GM12878 (cell line): ENCODE measurements at regions of chr7 and their contacts with region 1.

Region 1: GRCh38 chr7:24587848-24588247 is 14.6 kb downstream of the PALS2 start:
- DNase-seq: no peak
- ATAC-seq: peak; percentile 92
- H3K4me3 ChIP-seq: peak overlapping the region; percentile 18; the same call in 1 of the 2 replicates
- H3K27ac ChIP-seq: peak overlapping the region; percentile 30
- H3K4me1 ChIP-seq: peaks cover 24% of the 10 kb centered on the region
- H3K27me3 ChIP-seq: no peaks in the 10 kb centered on the region
- CTCF ChIP-seq: peak; percentile 67 to 79 (median 73)
- EP300 ChIP-seq: no peak
- POLR2A ChIP-seq: no peak
- RAD21 ChIP-seq: peak; percentile 91

Region 2: GRCh38 chr7:23863209-23863798 is 724.5 kb before region 1 on chr7:
- CTCF ChIA-PET with region 1: interaction called, 6 read pairs
- POLR2A ChIA-PET with region 1: no interaction called
- RAD21 ChIA-PET with region 1: interaction called, 3 read pairs
- SMC1A ChIA-PET with region 1: no interaction called
- in situ Hi-C with region 1: no loop called
- intact Hi-C with region 1: loop called (anchors 2 kb)
- DNase-seq: no peak
- ATAC-seq: peak; percentile 55; the same call in 2 of the 3 replicates
- H3K4me3 ChIP-seq: no peak overlapping the region
- H3K27ac ChIP-seq: no peak overlapping the region
- H3K4me1 ChIP-seq: no peaks in the 10 kb centered on the region
- H3K27me3 ChIP-seq: no peaks in the 10 kb centered on the region
- CTCF ChIP-seq: peak; percentile 53 to 63 (median 62)
- EP300 ChIP-seq: no peak
- POLR2A ChIP-seq: no peak
- RAD21 ChIP-seq: peak; percentile 85

Region 3: GRCh38 chr7:24290004-24290641 is 297.7 kb before region 1 on chr7:
- CTCF ChIA-PET with region 1: interaction called, 6 read pairs
- POLR2A ChIA-PET with region 1: no interaction called
- RAD21 ChIA-PET with region 1: interaction called, 3 read pairs
- SMC1A ChIA-PET with region 1: interaction called, 8 read pairs
- in situ Hi-C with region 1: no loop called
- intact Hi-C with region 1: loop called (anchors 1 kb)
- DNase-seq: peak; percentile 70
- ATAC-seq: peak; percentile 99
- H3K4me3 ChIP-seq: no peak overlapping the region
- H3K27ac ChIP-seq: no peak overlapping the region
- H3K4me1 ChIP-seq: 0 out of 2 replicates have a peak, but pooled peaks cover 2% of the 10 kb centered on the region
- H3K27me3 ChIP-seq: peaks cover 7% of the 10 kb centered on the region in 2 experiments
- CTCF ChIP-seq: peak; percentile 63 to 76 (median 71)
- EP300 ChIP-seq: no peak
- POLR2A ChIP-seq: no peak
- RAD21 ChIP-seq: peak; percentile 90

Region 4: DNA sequence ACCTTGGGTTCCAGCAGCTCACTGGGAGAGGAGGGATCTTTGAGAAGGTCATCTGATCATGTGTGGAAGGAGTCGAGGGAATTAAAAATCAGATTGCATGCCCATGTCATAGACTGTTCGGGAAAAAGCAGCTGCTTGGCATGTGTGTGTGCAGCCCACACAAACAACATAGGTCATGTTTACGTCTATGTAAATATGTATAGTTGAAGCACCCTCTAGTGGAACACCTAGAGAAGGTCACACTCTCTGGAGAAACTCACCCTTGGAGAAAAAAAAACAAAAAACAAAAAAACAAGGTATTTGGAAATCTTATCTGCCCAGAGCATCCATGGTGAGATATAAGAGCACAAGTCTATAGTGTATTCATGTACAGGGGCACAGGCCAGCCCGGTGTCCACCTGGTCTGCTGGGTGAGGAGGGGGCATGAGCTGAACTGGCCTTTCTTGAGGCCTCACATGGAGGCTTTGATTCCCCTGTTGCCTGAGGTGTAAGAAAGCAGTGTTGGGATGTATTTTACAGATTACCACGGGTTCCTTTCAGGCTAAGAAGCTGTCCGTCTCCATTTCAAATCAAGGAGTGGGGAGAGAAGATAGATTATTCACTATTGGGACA is 205.8 kb before region 1 on chr7:
- CTCF ChIA-PET with region 1: interaction called, 6 read pairs
- POLR2A ChIA-PET with region 1: no interaction called
- RAD21 ChIA-PET with region 1: no interaction called
- SMC1A ChIA-PET with region 1: interaction called, 4 read pairs
- in situ Hi-C with region 1: no loop called
- intact Hi-C with region 1: loop called (anchors 1 kb)
- DNase-seq: no peak
- ATAC-seq: peak; percentile 94
- H3K4me3 ChIP-seq: no peak overlapping the region
- H3K27ac ChIP-seq: no peak overlapping the region
- H3K4me1 ChIP-seq: peaks cover 3% of the 10 kb centered on the region
- H3K27me3 ChIP-seq: no peaks in the 10 kb centered on the region
- CTCF ChIP-seq: peak; percentile 56 to 65 (median 57)
- EP300 ChIP-seq: no peak
- POLR2A ChIP-seq: no peak
- RAD21 ChIP-seq: peak; percentile 85

Region 5: DNA sequence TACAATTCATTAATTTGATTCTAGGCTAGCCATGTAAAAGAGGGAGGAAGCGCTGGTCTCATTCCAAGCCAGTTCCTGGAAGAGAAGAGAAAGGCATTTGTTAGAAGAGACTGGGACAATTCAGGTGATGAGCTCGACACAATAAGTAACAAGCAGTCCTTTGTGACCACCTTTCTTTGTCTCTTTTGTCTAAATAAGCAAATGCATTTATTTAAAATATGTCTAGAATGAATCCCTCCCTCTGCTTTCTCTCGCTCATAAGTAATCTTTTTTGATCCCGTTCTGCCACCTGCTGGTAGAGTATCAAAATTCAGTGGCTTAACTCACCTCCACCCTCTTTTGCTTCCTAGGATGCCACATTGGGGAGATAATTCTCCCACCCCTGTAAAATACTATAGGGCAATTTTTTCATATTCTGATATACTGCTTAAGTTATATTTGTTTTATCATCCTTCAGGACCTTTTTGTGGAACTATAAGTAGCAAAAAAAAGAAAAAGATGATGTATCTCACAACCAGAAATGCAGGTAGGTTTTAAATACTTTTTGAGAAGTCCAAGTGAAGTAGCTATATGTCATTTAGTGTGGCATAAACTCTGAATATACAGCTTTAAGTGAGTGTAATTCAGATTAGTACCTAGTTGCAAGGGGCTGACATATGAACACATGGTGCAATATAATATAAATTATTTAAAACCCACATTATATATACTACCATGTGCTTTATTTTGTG is 77.9 kb after region 1 on chr7:
- CTCF ChIA-PET with region 1: interaction called, 113 read pairs
- POLR2A ChIA-PET with region 1: no interaction called
- RAD21 ChIA-PET with region 1: interaction called, 48 read pairs
- SMC1A ChIA-PET with region 1: interaction called, 82 read pairs
- in situ Hi-C with region 1: no loop called
- intact Hi-C with region 1: loop called (anchors 2 kb)
- DNase-seq: peak; percentile 27
- ATAC-seq: peak; percentile 92
- H3K4me3 ChIP-seq: no peak overlapping the region
- H3K27ac ChIP-seq: no peak overlapping the region
- H3K4me1 ChIP-seq: no peaks in the 10 kb centered on the region
- H3K27me3 ChIP-seq: no peaks in the 10 kb centered on the region
- CTCF ChIP-seq: peak; percentile 56 to 75 (median 56); a peak in 5 of 6 replicates
- EP300 ChIP-seq: no peak
- POLR2A ChIP-seq: no peak
- RAD21 ChIP-seq: peak; percentile 82